HEK293T (cell line): ENCODE measurements at regions of chr12 and their contacts with region 1.

Region 1: DNA sequence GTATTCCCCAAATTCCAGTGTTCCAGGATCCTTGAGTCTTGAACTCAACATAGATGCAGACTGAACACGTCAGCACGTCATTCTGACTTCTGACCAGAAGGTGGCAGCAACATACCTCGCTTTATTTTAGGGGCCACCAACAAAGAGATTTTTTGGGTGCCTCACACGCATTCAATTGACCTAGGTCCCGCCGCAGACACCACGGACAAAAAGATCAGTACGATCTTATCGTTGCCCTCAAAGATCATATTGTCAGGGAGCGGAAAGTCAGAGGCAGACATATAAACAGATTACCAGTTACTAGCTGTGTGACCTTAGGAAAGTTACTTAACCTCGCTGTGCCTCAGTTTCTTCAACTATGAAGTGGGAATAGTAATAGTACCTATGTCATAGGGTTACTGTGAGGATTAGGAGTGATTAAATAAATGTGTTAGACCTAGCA is 6.5 kb upstream of the PRPH start:
- DNase-seq: peak; percentile 76

Region 2: DNA sequence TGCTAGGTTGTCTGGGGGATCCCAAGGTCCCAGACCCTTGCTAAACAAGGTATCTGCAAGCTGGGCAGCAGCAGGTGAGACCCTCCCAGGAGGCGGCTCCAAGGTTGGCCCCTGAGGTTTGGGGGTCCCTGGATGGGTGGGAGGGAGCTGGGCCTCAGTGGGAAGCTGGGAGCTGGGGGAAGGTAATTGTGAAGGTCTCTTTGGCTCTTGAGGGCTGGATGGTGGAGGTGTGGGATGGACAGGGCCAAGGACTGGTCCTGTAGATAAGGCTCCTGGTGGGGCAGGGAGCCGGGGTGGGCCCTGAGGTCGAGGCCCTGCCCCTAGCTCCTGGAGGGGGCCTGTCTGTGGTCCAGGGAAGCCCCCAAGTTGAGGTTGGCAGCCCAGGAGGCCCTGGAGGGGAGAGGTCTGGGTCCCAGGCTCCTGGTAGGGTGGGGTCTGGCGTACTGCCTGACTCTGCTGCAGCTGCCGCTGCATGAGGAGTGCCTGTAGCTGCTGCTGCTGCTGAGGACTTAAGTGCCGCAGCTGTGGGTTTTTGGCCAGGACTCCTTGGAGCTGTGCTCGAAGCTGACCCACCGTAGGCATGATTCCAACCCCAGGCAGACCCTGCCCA is 256.8 kb before region 1 on chr12:
- CTCF ChIA-PET with region 1: no interaction called
- POLR2A ChIA-PET with region 1: no interaction called
- DNase-seq: no peak

Region 3: DNA sequence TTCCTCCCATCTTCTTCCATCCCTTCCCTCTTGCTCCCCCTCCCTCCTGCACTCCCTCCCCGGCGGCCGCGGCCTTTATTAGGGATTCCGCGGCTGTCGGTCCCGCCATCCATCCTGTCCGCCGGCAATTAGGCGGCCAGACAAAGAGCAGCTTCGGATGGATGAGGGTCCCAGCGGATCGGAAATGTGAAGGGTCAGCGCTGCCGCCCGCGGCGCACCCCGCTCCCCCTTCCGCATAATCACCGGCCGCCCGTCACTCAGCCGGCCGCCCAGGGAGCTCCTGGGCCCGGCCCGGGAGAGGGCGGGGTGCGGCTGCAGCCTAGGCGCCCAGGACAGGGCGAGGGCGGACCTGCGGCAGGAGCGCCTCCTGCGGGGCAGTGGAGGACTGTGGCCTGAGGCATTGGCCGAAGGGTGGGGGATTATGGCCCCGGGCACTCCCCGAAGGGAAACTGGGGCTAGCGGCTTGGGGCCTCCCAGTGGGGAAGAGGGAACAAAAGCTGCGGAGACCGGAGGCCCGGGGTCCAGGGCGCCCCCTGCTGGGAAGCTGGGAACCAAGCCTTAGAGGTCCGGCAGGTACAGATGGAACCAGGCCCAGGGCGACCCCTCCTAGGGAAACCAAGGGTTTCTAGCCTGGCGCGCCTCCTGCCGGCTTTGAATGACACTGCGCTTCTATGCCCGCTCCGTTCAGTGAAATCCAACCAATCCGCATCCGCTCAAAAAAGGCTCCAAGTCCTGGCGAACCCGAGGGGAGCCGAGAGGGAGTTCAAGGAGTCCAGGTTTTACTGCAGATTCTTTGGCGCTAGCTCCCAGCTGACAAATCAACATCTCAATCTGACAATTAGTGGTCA is 53.9 kb after region 1 on chr12:
- CTCF ChIA-PET with region 1: interaction called, 29 read pairs
- POLR2A ChIA-PET with region 1: interaction called, 13 read pairs
- DNase-seq: peak; percentile 88

Region 4: DNA sequence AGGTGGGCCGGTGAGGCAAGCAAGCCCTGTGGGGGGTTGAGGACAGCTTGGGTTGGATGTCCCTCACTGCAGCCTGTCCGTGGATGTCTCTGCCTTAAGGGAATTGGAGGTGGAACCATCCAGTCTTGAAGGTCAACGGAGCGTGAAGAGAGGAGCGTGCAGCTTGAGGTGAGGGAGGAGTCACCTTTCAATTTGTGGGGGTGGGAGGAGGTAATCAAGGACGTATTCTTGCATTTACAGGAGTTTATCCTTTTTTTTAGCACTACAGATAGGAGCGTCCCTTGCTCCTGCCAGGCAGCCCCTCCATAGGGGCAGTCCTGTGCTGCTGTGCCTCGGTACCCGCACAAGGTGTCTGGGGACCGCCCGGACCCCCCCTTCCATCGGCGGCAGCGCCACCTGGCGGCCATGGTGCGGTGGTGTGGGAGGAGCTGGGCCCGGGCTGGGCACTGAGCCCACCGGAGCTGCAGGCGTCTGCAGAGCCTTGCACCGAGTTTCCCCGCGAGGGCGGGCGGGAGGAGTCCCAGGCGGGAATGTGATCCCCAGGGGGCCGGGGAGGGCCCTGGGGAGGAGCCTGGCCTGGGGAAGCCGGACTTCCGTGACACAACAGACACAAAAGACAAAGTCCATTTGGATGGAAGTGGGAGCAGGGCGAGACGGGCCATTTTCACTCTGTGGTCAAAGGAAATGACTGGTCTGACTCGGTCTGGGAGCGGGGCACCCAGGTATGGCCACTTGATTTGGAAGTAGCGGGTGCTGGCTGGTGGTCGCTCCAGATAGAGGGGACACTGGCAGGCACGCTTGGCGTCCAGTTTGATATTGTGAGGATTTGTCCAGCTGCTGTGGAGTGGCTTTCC is 59.2 kb after region 1 on chr12:
- CTCF ChIA-PET with region 1: interaction called, 29 read pairs
- POLR2A ChIA-PET with region 1: interaction called, 13 read pairs
- DNase-seq: peak; percentile 89